ENCODE measurements at regions of chr5 and their contacts with region 1.

Region 1: DNA sequence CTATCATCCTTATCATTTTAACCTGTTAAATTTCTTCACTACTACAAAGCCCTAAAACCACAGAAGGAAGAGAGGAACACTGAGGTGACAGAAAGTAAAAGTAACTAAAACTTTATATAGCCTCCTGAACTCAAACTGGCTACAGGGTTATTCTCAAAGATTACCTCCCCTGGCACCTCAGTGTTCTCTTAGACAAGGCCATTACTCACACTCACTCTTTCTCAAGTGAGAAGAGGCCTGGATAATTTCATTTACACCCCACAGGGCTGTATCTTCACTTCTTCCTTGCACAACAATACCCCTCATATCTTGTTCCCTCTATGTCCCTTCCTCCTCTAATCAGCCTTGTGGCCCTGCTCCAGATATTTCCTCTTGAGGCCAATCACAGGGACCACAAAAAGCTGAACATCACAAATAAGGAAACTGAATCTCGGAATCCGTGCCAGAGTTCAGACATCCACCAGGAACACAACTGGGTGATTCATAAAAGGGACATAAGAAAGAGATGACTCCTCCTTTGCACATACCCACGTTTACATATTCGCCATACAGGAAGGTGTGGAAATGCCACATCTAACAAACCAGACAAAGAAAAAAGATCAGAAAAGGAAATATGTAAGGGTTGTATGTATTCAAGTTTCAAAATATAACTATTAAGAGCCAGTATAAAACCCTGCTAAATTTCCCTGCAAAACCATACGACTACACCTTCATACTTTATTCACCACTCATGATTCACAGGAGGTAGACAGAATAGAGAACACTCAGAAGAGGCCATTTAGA is 1.7 kb upstream of the KLHL3 start:
- DNase-seq: no peak
- H3K4me3 Mint-ChIP-seq: peak overlapping the region; percentile 56
- H3K27ac Mint-ChIP-seq: peak overlapping the region; percentile 83
- H3K4me1 Mint-ChIP-seq: no peaks in the 10 kb centered on the region
- H3K27me3 Mint-ChIP-seq: peaks cover 9% of the 10 kb centered on the region

Region 2: GRCh38 chr5:137695651-137696428 is 41.7 kb before region 1 on chr5:
- intact Hi-C with region 1: loop called (anchors 1 kb)
- DNase-seq: peak; percentile 6
- H3K4me3 Mint-ChIP-seq: peak overlapping the region; percentile 60
- H3K27ac Mint-ChIP-seq: peak overlapping the region; percentile 83
- H3K4me1 Mint-ChIP-seq: peaks cover 29% of the 10 kb centered on the region
- H3K27me3 Mint-ChIP-seq: no peaks in the 10 kb centered on the region

Region 3: DNA sequence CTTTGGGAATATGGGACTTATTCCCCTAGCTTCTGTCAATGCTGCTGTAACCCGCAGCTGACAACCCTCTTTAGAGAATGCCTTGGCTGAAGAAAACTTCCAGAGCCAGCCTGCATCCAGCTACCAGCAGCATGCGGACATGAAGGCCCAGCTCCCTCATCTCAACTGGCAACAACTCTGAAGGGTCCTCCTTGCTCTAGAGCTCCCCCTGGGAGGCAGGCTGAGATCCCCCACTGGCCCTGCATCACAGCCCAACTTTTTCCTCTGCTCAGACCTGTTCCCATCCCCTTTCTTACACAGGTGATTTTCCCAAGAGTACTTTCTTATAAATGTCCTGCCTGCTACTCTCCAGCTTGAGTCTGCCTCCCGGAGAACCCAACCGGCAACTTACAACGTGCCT is 327.6 kb after region 1 on chr5:
- intact Hi-C with region 1: no loop called
- DNase-seq: no peak
- H3K4me3 Mint-ChIP-seq: no peak overlapping the region
- H3K27ac Mint-ChIP-seq: no peak overlapping the region
- H3K4me1 Mint-ChIP-seq: peaks cover 7% of the 10 kb centered on the region
- H3K27me3 Mint-ChIP-seq: no peaks in the 10 kb centered on the region

Measured in activated T-helper 1 cell treated with anti-CD3 and anti-CD28 coated beads, Interleukin-12 subunit alpha, Interleukin-12 subunit beta, Interleukin-2, Interleukin-4 antibody, amounts not matched to agents 30 ng/mL and 10 ng/mL and 1 ng/mL, durations not matched to agents 14 hours and 24 hours and 36 hours (primary cell).